ENCODE measurements at regions of chr17 and their contacts with region 1.

Region 1: GRCh38 chr17:35540589-35541404 is 3.3 kb upstream of the SLFN12L start:
- DNase-seq: peak in 17 of 35 experiments; percentile 7 to 69 (median 28)
- ATAC-seq: peak; percentile 18 to 47 (median 45)
- H3K4me3 ChIP-seq: peak overlapping the region; percentile 42 to 43
- H3K4me3 Mint-ChIP-seq: peak overlapping the region; percentile 75 to 88 (median 75)
- H3K27ac ChIP-seq: peak overlapping the region; percentile 82
- H3K27ac Mint-ChIP-seq: peak overlapping the region; percentile 89 to 99
- H3K4me1 ChIP-seq: peaks cover 27 to 34% of the 10 kb centered on the region in 2 experiments
- H3K4me1 Mint-ChIP-seq: peaks cover 52 to 59% (median 58%) of the 10 kb centered on the region in 3 donors
- H3K27me3 ChIP-seq: no peaks in the 10 kb centered on the region
- H3K27me3 Mint-ChIP-seq: no peaks in the 10 kb centered on the region

Region 2: DNA sequence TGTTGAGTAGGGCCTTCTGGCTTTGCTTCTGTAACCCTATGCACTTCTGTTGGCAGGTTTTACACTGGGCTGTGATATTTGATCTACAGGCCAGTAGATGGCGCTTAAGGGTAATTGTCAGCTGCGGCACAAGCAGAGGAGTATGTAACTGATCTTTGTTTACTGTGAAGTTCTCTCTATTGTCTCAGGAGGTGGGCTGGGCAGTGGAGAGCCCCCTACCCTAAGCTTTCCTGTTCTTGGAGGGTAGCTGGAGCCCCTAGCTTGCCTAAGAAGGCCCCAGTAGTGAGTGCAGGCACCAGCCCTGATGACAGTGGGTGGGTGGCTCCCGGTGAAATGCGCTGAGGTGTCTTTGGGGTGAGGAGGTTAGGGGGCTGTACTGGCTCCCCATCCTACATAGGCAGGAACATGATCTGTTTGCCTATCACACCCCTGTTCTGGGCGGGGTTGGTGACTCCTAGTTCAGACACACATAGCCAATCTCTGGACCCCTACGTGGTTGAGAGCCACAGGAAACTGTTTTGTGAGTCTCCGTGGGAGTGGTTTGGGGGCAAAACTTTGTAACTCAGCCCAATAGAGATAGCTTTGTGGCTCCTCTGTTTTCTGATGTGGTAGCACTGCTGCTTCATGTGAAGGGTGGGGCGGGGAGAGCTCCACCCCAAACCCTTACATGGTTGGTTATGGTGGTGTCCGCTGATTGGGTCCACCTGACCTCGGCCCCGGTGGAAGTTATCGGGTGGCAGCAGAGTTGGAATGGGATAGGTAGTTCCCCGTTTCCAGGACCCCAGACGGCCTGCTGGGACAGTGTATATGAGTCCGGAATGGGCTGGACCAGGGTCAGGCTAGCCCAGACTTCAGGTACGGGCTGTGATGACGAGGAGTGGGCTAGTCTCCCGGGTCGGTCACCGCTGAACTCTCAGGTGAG is 227.7 kb before region 1 on chr17:
- CTCF ChIA-PET with region 1: interaction called, 6 to 136 read pairs
- POLR2A ChIA-PET with region 1: interaction called in 1 of 2 experiments, 4 read pairs
- DNase-seq: peak; percentile 72 to 98 (median 92)
- ATAC-seq: peak; percentile 87 to 91 (median 89)
- H3K4me3 ChIP-seq: peak overlapping the region; percentile 52 to 86
- H3K4me3 Mint-ChIP-seq: peak overlapping the region; percentile 91 to 93 (median 91)
- H3K27ac ChIP-seq: peak overlapping the region; percentile 93
- H3K27ac Mint-ChIP-seq: peak overlapping the region; percentile 97 to 98
- H3K4me1 ChIP-seq: peaks cover 4 to 32% of the 10 kb centered on the region in 2 experiments
- H3K4me1 Mint-ChIP-seq: peaks cover 58 to 72% (median 60%) of the 10 kb centered on the region in 3 donors
- H3K27me3 ChIP-seq: no peaks in the 10 kb centered on the region
- H3K27me3 Mint-ChIP-seq: no peaks in the 10 kb centered on the region

Region 3: GRCh38 chr17:35486920-35487732 is 53.7 kb before region 1 on chr17:
- CTCF ChIA-PET with region 1: interaction called in 1 of 2 experiments, 12 read pairs
- POLR2A ChIA-PET with region 1: no interaction called
- DNase-seq: peak; percentile 46 to 85 (median 65)
- ATAC-seq: peak; percentile 77 to 84 (median 83)
- H3K4me3 ChIP-seq: peak overlapping the region; percentile 75 to 82
- H3K4me3 Mint-ChIP-seq: peak overlapping the region; percentile 94 to 96 (median 95)
- H3K27ac ChIP-seq: peak overlapping the region; percentile 83
- H3K27ac Mint-ChIP-seq: peak overlapping the region; percentile 94 to 98
- H3K4me1 ChIP-seq: peaks cover 9 to 31% of the 10 kb centered on the region in 2 experiments
- H3K4me1 Mint-ChIP-seq: peaks cover 53 to 81% (median 64%) of the 10 kb centered on the region in 3 donors
- H3K27me3 ChIP-seq: no peaks in the 10 kb centered on the region
- H3K27me3 Mint-ChIP-seq: no peaks in the 10 kb centered on the region

Region 4: DNA sequence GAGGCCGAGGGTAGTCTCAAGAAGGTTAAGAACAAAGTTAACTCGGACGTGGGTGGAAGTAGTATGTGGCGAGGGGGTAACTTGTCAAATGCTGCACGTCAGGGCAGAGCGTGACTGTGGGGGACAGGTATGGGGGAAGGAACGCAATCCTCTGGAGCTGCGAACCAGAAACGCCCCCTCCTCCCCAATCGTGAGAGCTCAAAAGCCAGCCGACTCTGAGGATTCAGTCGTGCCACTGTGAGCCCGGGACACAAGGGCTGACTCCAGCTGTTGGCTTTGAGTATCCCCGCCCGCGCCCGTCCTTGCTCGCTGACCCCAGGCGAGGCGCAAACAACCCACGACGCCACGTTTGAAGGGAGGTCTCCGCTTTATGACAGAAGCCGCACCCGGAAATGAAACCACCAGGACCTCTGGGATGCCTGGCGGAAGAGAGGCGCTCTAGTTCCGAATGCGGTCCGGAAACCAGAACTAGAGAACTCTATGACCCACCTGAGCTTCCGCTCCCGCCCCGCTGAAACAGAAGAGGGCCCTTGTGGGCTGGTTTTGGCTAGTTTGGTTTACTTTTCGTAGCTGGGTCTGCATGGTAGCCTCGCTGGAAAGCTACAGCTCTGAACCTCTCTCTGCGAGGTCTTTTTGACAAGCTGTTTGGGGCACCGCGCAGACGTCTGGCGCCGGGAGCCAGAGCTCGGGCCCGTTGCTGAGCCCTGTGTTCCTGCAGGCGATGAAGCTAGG is 37.6 kb after region 1 on chr17 and contains the start of gene PEX12:
- CTCF ChIA-PET with region 1: interaction called in 1 of 2 experiments, 12 read pairs
- POLR2A ChIA-PET with region 1: interaction called, 3 to 15 read pairs
- DNase-seq: peak; percentile 72 to 94 (median 87)
- ATAC-seq: peak; percentile 97 to 99 (median 98)
- H3K4me3 ChIP-seq: peak within 1 kb of the TSS; percentile 78 to 89
- H3K4me3 Mint-ChIP-seq: peak within 1 kb of the TSS; percentile 94 to 97 (median 97)
- H3K27ac ChIP-seq: peak within 1 kb of the TSS; percentile 94
- H3K27ac Mint-ChIP-seq: peak within 1 kb of the TSS; percentile 99
- H3K4me1 ChIP-seq: peaks cover 14 to 15% of the 10 kb centered on the region in 2 experiments
- H3K4me1 Mint-ChIP-seq: peaks cover 27 to 36% (median 28%) of the 10 kb centered on the region in 3 donors
- H3K27me3 ChIP-seq: no peaks in the 10 kb centered on the region
- H3K27me3 Mint-ChIP-seq: no peaks in the 10 kb centered on the region
- total RNA-seq, gene PEX12: 3.6 to 6.6 (median 5.6) TPM

Region 5: DNA sequence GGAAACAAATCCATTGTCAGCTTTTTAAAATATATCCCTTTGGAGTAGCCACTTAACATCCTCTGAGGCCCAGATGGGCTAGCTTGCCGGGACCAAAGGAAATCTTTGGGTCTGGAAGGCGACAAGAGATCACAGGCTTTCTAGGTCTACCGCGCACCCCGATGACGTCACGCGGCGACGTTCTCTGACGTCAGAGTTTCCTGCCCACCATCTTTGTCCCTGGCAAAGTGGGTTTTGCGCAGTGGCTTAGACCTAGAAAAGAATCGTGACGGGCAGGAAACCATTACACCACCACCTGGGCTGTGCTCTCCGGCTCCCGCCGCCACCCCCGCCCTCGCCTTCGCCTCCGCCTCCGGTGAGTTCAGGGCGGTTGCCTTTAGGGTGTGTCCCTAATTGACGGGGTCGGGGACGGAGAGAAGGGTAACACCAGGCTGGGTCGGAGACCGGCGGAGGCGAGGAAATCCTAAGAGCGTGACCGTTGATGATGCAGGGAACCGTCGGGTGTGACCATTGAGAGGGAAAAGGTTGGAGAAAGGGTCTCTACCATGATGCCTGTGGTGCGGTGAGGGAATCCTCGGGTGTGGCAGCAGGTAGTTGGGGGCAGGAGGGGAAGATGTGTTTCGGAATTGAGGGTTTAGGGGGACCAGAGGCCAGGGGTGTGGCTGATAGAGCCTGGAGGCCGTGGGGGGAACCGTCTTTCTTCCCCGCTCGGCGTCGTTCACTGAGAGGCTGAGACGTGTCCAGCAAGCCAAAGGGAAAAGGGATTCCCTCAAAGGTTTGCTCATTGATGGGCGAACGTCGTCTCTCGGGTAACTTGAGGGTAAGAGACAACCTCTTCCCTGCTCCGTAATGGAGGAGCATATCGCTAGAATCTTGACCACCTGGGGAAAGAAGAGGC is 46.5 kb after region 1 on chr17 and contains the start of gene AP2B1:
- CTCF ChIA-PET with region 1: interaction called in 1 of 2 experiments, 3 read pairs
- POLR2A ChIA-PET with region 1: interaction called in 1 of 2 experiments, 15 read pairs
- DNase-seq: peak; percentile 90 to 100 (median 94)
- ATAC-seq: peak; percentile 98 to 99 (median 99)
- H3K4me3 ChIP-seq: peak within 1 kb of the TSS; percentile 65 to 74
- H3K4me3 Mint-ChIP-seq: peak within 1 kb of the TSS; percentile 93 to 98 (median 96)
- H3K27ac ChIP-seq: peak within 1 kb of the TSS; percentile 94
- H3K27ac Mint-ChIP-seq: peak within 1 kb of the TSS; percentile 96 to 99
- H3K4me1 ChIP-seq: peaks cover 11 to 20% of the 10 kb centered on the region in 2 experiments
- H3K4me1 Mint-ChIP-seq: peaks cover 38 to 43% (median 38%) of the 10 kb centered on the region in 3 donors
- H3K27me3 ChIP-seq: peaks cover 0 to 4% of the 10 kb centered on the region in 2 experiments
- H3K27me3 Mint-ChIP-seq: no peaks in the 10 kb centered on the region
- total RNA-seq, gene AP2B1: 106 to 157 (median 134) TPM

Region 6: GRCh38 chr17:35726127-35726952 is 185.5 kb after region 1 on chr17:
- CTCF ChIA-PET with region 1: no interaction called
- POLR2A ChIA-PET with region 1: no interaction called
- DNase-seq: no peak
- ATAC-seq: no peak
- H3K4me3 ChIP-seq: no peak overlapping the region
- H3K4me3 Mint-ChIP-seq: no peak overlapping the region
- H3K27ac ChIP-seq: no peak overlapping the region
- H3K27ac Mint-ChIP-seq: no peak overlapping the region
- H3K4me1 ChIP-seq: peaks cover 8 to 15% of the 10 kb centered on the region in 2 experiments
- H3K4me1 Mint-ChIP-seq: peaks cover 16 to 22% (median 19%) of the 10 kb centered on the region in 3 donors
- H3K27me3 ChIP-seq: no peaks in the 10 kb centered on the region
- H3K27me3 Mint-ChIP-seq: no peaks in the 10 kb centered on the region

Measured in T-cell (primary cell).